ENCODE measurements at regions of chr14 and their contacts with region 1.

Region 1: DNA sequence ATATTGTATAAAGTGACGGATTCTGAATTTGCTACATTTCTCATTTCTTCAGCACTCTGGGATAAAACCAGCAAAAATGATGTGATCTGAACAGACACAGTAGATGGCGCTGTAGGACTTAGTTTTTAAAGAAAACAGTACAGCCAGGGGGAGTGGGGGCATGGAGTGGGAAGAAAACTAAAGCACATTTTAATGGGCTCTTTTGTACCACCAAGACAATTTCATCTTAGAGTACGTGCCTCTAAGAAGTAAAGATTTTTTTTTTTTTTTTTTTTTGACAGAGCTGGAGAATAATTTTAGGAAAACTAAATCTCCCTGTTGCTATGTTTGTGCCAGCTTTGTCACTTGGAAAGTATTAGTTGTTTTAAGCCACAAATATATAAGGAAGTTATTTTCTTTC is 124.4 kb downstream of the RAD51B start:
- DNase-seq: peak; percentile 73
- ATAC-seq: peak; percentile 60; the same call in 2 of the 3 replicates
- H3K4me3 ChIP-seq: no peak overlapping the region
- H3K27ac ChIP-seq: no peak overlapping the region
- H3K4me1 ChIP-seq: peaks cover 42% of the 10 kb centered on the region
- H3K27me3 ChIP-seq: no peaks in the 10 kb centered on the region
- CTCF ChIP-seq: peak; percentile 80
- EP300 ChIP-seq: no peak
- POLR2A ChIP-seq: no peak
- RAD21 ChIP-seq: peak; percentile 73

Region 2: GRCh38 chr14:67837011-67837624 is 106.8 kb before region 1 on chr14:
- CTCF ChIA-PET with region 1: no interaction called
- POLR2A ChIA-PET with region 1: no interaction called
- in situ Hi-C with region 1: no loop called
- intact Hi-C with region 1: loop called (anchors 2 kb)
- DNase-seq: peak; percentile 74
- ATAC-seq: no peak
- H3K4me3 ChIP-seq: no peak overlapping the region
- H3K27ac ChIP-seq: no peak overlapping the region
- H3K4me1 ChIP-seq: peaks cover 9% of the 10 kb centered on the region; the same call in 1 of the 2 replicates
- H3K27me3 ChIP-seq: no peaks in the 10 kb centered on the region
- CTCF ChIP-seq: peak; percentile 78
- EP300 ChIP-seq: no peak
- POLR2A ChIP-seq: no peak
- RAD21 ChIP-seq: peak; percentile 60

Region 3: DNA sequence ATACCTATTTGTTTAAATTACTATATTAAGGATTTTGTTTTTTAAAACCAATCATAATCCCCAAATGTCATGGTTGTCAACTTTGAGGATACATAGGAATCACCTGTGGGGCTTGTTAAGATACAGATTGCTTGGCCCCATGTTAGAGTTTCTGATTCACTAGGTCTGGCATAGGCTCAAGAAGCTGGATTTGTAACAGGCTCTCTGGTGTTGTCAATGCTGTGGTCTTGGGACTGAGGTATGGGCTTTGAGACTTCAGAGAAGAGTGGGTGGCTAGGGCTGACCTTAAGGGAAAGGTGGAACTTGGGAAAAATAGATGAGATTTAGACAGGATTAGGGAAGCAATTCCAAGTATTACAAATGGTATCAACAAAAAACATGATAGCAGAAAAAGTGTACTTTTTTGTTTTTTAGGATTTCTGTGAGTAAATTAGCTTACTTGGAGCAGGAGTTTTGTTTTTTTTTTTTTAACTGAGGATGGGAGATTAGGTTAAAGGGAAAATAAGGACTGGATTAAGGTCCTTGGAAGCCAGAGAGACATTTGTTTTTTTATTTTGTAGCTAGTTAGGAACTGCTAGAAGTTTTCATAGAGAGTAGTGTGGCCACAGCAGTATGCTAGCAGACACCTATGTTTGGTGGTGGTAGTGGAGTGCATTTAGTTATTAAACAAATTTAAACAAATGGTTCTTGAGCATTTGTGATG is 35.7 kb before region 1 on chr14:
- CTCF ChIA-PET with region 1: no interaction called
- POLR2A ChIA-PET with region 1: no interaction called
- in situ Hi-C with region 1: no loop called
- intact Hi-C with region 1: no loop called
- DNase-seq: no peak
- ATAC-seq: no peak
- H3K4me3 ChIP-seq: no peak overlapping the region
- H3K27ac ChIP-seq: no peak overlapping the region
- H3K4me1 ChIP-seq: no peaks in the 10 kb centered on the region
- H3K27me3 ChIP-seq: no peaks in the 10 kb centered on the region
- CTCF ChIP-seq: no peak
- EP300 ChIP-seq: no peak
- POLR2A ChIP-seq: no peak
- RAD21 ChIP-seq: no peak

Region 4: DNA sequence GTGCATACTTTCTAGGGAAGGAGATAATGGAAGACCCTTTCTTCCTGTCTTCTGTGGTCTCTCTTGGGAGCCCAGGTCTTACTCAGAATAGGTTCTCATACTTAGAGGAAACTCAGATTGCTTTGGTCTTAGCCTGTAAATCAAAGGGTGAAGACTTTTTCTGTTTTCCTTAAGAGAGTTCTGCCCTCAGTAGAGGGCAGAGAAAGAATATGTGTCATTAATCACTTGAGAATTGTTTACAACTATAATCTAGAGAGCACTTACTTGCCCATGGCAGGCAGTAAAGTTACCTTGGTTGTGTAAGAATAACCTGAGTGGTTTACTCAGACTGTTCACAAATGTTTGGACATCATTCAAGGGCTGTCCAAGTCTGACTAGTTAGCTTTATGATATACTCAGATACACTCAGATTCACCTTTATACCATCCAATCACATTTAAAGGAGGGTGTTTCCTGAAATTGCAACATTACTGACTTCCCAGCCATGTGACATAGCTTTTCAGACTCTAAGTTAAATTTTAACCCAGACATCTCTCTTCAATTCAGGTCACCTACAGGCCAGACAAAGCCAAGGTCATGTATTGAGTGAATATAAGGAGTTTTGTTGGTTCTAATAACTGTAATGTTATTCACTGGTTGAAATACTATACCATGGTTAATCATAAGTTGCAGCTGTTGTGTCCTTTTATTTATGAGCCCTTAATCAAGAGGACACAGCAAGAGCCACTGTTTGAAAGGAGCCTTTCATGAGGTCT is 247.8 kb after region 1 on chr14:
- CTCF ChIA-PET with region 1: no interaction called
- POLR2A ChIA-PET with region 1: no interaction called
- in situ Hi-C with region 1: no loop called
- intact Hi-C with region 1: no loop called
- DNase-seq: peak; percentile 92
- ATAC-seq: peak; percentile 95
- H3K4me3 ChIP-seq: no peak overlapping the region
- H3K27ac ChIP-seq: no peak overlapping the region
- H3K4me1 ChIP-seq: peaks cover 60% of the 10 kb centered on the region
- H3K27me3 ChIP-seq: no peaks in the 10 kb centered on the region
- CTCF ChIP-seq: no peak
- EP300 ChIP-seq: peak in 1 of 2 experiments; percentile 73; a peak in 2 of 4 replicates
- POLR2A ChIP-seq: no peak
- RAD21 ChIP-seq: no peak

Region 5: GRCh38 chr14:68341411-68342212 is 397.7 kb after region 1 on chr14:
- CTCF ChIA-PET with region 1: no interaction called
- POLR2A ChIA-PET with region 1: no interaction called
- in situ Hi-C with region 1: no loop called
- intact Hi-C with region 1: no loop called
- DNase-seq: no peak
- ATAC-seq: no peak
- H3K4me3 ChIP-seq: no peak overlapping the region
- H3K27ac ChIP-seq: no peak overlapping the region
- H3K4me1 ChIP-seq: peaks cover 4% of the 10 kb centered on the region
- H3K27me3 ChIP-seq: no peaks in the 10 kb centered on the region
- CTCF ChIP-seq: no peak
- EP300 ChIP-seq: no peak
- POLR2A ChIP-seq: no peak
- RAD21 ChIP-seq: no peak

Region 6: DNA sequence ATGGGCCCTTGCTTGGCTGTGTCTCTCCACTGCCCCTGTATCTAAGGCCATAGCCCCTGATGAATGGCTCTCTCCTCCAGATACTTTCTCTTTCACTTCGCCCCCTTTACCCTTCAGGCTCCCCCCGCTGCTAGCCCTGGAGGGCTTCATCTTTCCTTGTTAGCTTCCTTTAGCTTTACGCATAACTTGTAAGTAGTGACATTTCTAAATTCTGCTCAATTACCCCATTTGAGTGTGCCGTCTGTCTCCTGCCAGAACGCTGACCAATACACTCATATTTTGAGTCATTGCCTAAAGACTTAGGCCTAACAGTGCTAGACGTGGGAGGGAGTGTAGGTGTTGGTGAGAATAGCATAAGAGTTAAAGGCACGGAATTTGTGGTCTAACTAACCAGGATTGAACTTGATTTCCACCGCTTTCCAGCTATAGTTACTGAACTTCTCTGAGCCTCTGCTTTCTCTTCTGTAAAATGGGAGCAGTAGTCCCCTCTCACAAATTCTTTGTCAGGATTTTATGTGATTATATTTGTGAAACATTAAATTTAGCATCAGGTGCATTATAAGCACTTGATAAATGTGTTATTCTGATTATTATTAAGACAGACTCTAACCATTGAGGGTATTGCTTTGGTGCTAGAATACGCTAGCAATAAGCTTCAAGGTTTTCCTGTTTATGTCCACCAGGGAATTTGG is 719.6 kb after region 1 on chr14:
- CTCF ChIA-PET with region 1: no interaction called
- POLR2A ChIA-PET with region 1: no interaction called
- in situ Hi-C with region 1: loop called (anchors 25 kb)
- intact Hi-C with region 1: no loop called
- DNase-seq: no peak
- ATAC-seq: no peak
- H3K4me3 ChIP-seq: no peak overlapping the region
- H3K27ac ChIP-seq: no peak overlapping the region
- H3K4me1 ChIP-seq: peaks cover 37% of the 10 kb centered on the region
- H3K27me3 ChIP-seq: no peaks in the 10 kb centered on the region
- CTCF ChIP-seq: no peak
- EP300 ChIP-seq: no peak
- POLR2A ChIP-seq: no peak
- RAD21 ChIP-seq: no peak

Region 7: DNA sequence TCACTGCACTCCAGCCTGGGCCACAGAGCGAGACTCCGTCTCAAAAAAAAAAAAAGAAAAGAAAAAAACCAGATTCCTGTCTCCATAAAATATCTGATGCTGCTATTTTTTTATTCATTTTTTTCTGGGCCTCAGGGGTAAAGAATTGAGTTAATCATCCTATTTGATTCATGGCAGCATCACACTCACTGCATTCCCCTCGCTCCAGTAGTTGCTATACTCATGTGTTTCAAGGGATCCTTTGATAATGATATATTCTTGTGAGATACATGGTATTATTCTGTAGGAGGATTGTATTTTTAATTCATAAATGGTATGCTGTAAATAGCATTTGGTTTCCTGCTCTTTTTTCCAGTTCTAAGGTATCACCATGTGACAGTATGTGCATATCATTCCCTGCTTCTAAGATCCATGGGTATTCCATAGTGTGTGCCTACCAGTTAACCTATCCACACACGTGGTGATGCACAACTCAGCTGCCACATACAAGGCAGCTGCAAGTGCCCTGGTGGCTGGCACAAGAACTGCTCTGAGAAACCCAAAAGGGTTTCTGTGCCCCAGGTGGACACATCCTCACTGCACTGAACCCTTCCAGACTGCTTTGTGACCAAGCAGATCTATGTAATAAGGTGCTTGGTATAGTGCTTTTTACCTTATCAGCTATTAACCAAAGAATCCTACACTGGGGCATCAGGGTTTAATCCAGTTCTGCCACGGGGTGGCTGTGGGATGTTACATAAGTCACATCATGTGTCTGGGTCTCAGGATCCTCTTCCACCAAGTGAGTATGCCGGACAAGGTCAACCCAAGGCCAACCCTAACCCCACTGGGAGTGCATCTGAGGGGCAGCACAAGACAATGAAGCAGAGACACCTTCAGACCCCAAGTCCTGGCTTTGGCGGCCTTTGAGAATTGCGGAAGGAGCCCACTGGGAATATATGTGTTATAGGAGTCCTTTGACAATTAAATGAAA is 774.4 kb after region 1 on chr14:
- CTCF ChIA-PET with region 1: no interaction called
- POLR2A ChIA-PET with region 1: no interaction called
- in situ Hi-C with region 1: no loop called
- intact Hi-C with region 1: loop called (anchors 10 kb)
- DNase-seq: no peak
- ATAC-seq: peak; percentile 54
- H3K4me3 ChIP-seq: no peak overlapping the region
- H3K27ac ChIP-seq: no peak overlapping the region
- H3K4me1 ChIP-seq: peaks cover 65% of the 10 kb centered on the region
- H3K27me3 ChIP-seq: no peaks in the 10 kb centered on the region
- CTCF ChIP-seq: no peak
- EP300 ChIP-seq: no peak
- POLR2A ChIP-seq: no peak
- RAD21 ChIP-seq: 0 out of 2 replicates have a peak, but pooled peaks have one; percentile 19

Region 8: GRCh38 chr14:68843471-68844209 is 899.7 kb after region 1 on chr14:
- CTCF ChIA-PET with region 1: interaction called, 7 read pairs
- POLR2A ChIA-PET with region 1: no interaction called
- in situ Hi-C with region 1: no loop called
- intact Hi-C with region 1: loop called (anchors 5 kb)
- DNase-seq: no peak
- ATAC-seq: peak; percentile 91
- H3K4me3 ChIP-seq: peak overlapping the region; percentile 24 to 56 (median 34); a peak in 4 of 6 replicates
- H3K27ac ChIP-seq: no peak overlapping the region
- H3K4me1 ChIP-seq: 0 out of 2 replicates have a peak, but pooled peaks cover 7% of the 10 kb centered on the region
- H3K27me3 ChIP-seq: no peaks in the 10 kb centered on the region
- CTCF ChIP-seq: peak; percentile 85
- EP300 ChIP-seq: no peak
- POLR2A ChIP-seq: no peak
- RAD21 ChIP-seq: peak; percentile 56